Panc1 (cell line): ENCODE measurements at regions of chr2 and their contacts with region 1.

Region 1: DNA sequence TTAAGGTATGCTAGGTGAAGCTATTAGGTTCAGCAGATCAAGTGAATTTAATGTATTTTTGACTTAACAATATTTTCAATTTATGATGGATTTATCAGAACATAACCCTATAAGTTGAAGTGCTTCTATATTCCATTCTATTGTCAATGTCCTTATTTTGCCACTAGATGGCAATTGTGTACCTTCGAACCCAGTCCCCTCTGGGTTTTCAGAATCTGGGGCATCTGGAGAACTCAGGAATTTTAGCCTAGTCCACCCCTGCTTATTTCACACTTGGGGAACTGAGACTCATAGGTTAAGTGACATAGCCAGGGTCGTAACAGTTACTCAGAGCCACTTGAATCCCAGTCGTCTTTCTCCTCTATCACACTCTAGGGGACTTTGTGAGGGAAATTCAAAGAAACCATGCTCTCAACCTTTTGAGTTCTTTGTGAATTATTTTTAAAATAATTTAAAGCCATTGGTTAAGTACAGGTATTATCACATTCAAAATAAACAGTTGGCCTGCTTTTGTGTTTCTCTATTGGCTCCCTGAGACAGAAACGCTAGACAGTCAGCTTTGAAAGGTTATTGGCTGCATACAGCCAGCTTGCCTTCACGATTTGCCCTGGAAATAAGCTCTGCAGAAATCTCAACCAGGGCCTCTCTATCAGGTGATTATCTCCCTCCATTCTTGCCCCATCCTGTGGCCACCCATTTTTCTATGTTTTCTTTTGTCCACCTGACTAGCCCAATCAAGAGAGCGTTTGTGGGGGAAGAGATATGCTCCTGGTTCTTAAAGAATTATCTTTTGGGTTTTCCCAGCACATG is 145.0 kb downstream of the TTC27 start:
- DNase-seq: peak; percentile 42
- ATAC-seq: peak; percentile 80
- H3K4me3 ChIP-seq: no peak overlapping the region
- H3K27ac ChIP-seq: no peak overlapping the region
- H3K4me1 ChIP-seq: no peaks in the 10 kb centered on the region
- H3K27me3 ChIP-seq: no peaks in the 10 kb centered on the region
- CTCF ChIP-seq: peak; percentile 78

Region 2: GRCh38 chr2:31853521-31853920 is 919.3 kb before region 1 on chr2:
- CTCF ChIA-PET with region 1: no interaction called
- POLR2A ChIA-PET with region 1: no interaction called
- in situ Hi-C with region 1: no loop called
- intact Hi-C with region 1: no loop called
- DNase-seq: no peak
- ATAC-seq: no peak
- H3K4me3 ChIP-seq: no peak overlapping the region
- H3K27ac ChIP-seq: no peak overlapping the region
- H3K4me1 ChIP-seq: no peaks in the 10 kb centered on the region
- H3K27me3 ChIP-seq: no peaks in the 10 kb centered on the region
- CTCF ChIP-seq: no peak

Region 3: DNA sequence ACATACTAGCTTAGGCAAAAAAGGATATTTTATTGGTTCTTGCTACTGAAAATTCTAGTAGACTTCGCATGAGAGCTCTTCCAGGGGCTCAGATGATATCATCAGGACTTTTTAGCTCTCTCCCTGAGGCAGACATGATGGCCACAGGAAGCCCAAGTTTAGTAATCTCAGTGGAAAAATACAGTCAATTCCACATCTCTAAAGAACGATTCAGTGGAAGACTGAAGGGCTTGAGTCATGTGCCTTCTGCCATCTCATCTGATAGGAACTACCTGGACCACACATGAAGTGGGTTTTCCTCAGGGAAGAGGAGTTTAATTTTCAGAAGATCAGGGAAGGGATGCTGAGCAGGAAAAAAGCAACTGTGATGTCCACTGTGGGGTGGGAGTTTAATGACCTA is 27.7 kb before region 1 on chr2:
- CTCF ChIA-PET with region 1: no interaction called
- POLR2A ChIA-PET with region 1: interaction called, 12 read pairs
- in situ Hi-C with region 1: no loop called
- intact Hi-C with region 1: no loop called
- DNase-seq: no peak
- ATAC-seq: no peak
- H3K4me3 ChIP-seq: no peak overlapping the region
- H3K27ac ChIP-seq: no peak overlapping the region
- H3K4me1 ChIP-seq: no peaks in the 10 kb centered on the region
- H3K27me3 ChIP-seq: no peaks in the 10 kb centered on the region
- CTCF ChIP-seq: no peak

Region 4: GRCh38 chr2:32946314-32947075 is 173.7 kb after region 1 on chr2 and contains the start of gene LTBP1:
- CTCF ChIA-PET with region 1: no interaction called
- POLR2A ChIA-PET with region 1: no interaction called
- in situ Hi-C with region 1: no loop called
- intact Hi-C with region 1: loop called (anchors 1 kb)
- DNase-seq: peak; percentile 53
- ATAC-seq: peak; percentile 93
- H3K4me3 ChIP-seq: peak within 1 kb of the TSS; percentile 60 to 70
- H3K27ac ChIP-seq: no peak within 1 kb of the TSS
- H3K4me1 ChIP-seq: no peaks in the 10 kb centered on the region
- H3K27me3 ChIP-seq: no peaks in the 10 kb centered on the region
- CTCF ChIP-seq: peak; percentile 97
- total RNA-seq, gene LTBP1: 12.5 TPM

Region 5: GRCh38 chr2:33033606-33034081 is 260.8 kb after region 1 on chr2:
- CTCF ChIA-PET with region 1: interaction called, 3 read pairs
- POLR2A ChIA-PET with region 1: no interaction called
- in situ Hi-C with region 1: no loop called
- intact Hi-C with region 1: loop called (anchors 5 kb)
- DNase-seq: no peak
- ATAC-seq: no peak
- H3K4me3 ChIP-seq: no peak overlapping the region
- H3K27ac ChIP-seq: no peak overlapping the region
- H3K4me1 ChIP-seq: no peaks in the 10 kb centered on the region
- H3K27me3 ChIP-seq: no peaks in the 10 kb centered on the region
- CTCF ChIP-seq: peak; percentile 63; the same call in 1 of the 2 replicates

Region 6: DNA sequence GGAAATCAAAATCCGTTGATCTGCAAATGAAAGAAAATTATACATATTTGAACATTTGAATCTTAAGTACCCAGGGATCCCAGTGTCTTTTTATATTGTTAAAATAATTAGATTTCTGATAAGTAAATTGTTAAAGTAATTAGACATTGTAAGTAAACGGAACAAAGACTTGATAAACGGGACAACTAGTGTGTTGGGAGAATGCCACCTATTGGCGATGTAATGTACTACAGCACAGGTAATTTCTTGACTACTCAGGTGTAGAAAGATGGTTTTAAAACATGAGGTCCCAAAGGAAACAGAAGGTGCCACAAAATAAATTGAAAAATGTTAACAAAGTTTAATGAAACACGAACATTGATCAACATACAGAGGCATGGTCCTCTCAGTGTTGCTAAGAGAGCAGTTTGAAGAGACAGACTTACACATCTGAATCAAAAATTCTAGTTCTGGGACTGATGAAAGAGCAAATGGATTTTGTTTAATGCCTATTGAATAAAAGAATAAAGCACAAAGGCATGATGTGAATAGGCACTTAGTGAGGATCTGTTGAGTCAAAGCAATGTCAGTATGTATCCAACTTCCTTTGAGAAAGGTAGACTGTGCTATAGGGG is 600.2 kb after region 1 on chr2:
- CTCF ChIA-PET with region 1: no interaction called
- POLR2A ChIA-PET with region 1: no interaction called
- in situ Hi-C with region 1: no loop called
- intact Hi-C with region 1: loop called (anchors 5 kb)
- DNase-seq: peak; percentile 62
- ATAC-seq: no peak
- H3K4me3 ChIP-seq: no peak overlapping the region
- H3K27ac ChIP-seq: no peak overlapping the region
- H3K4me1 ChIP-seq: no peaks in the 10 kb centered on the region
- H3K27me3 ChIP-seq: no peaks in the 10 kb centered on the region
- CTCF ChIP-seq: peak; percentile 82; the same call in 1 of the 2 replicates

Region 7: DNA sequence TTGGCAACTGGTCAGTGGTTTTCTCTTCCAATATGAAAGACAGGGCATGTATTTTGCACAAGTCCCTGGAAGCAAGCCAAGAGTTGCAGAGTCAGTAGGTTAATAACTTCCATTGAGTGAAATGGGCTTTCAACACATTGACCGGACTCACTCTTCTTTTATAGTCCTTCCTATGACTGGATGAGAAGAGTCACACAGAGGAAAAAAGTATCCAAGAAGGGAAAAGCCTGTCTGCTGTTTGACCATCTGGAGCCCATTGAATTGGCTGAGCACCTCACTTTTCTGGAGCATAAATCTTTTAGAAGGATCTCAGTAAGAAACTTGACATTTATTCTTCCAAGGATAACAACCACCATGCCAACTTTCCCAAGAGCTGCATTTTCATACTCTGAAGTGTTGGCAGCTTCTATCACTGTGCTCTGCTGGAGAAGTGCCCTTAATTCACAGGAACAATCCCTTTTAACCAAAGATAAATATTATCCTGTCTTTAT is 749.0 kb after region 1 on chr2:
- CTCF ChIA-PET with region 1: no interaction called
- POLR2A ChIA-PET with region 1: no interaction called
- in situ Hi-C with region 1: no loop called
- intact Hi-C with region 1: no loop called
- DNase-seq: no peak
- ATAC-seq: no peak
- H3K4me3 ChIP-seq: no peak overlapping the region
- H3K27ac ChIP-seq: no peak overlapping the region
- H3K4me1 ChIP-seq: no peaks in the 10 kb centered on the region
- H3K27me3 ChIP-seq: no peaks in the 10 kb centered on the region
- CTCF ChIP-seq: no peak